ENCODE measurements at regions of chr5 and their contacts with region 1.

Region 1: DNA sequence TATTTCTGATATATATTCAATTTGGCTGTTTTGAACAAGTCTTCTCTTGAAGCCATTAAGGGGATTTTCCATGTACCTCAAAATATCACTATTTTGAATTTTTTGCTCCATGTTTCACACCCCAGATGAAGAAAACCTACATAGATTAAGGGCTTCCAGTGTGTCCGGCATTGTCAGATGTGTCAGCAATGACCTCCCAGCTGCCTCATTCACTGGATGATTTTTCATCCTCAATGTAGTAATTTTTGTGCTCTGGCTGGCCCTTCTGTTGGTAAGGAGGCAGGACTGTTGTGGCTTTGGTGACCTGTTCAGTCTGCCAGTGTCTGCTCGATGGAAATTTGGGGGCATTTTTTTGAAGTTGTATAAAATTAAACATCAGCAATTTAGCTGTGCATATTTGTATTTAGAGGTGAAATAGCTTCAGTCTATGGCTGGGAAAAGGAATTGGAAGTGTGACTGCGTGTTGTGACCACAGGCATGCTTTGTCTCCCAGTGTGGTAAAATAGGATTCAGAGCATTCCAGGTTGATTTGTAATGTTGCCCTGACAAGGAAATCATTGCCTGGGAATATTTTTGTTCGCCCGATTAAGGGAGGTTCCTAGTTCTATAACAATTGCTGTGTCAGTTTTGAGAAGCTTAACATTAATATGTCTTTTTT is 312.4 kb downstream of the ARHGEF28 start:
- DNase-seq: no peak
- H3K4me3 ChIP-seq: no peak overlapping the region
- H3K27ac ChIP-seq: peak overlapping the region; percentile 63 to 75
- H3K4me1 ChIP-seq: peaks cover 0 to 21% of the 10 kb centered on the region in 2 donors
- H3K27me3 ChIP-seq: no peaks in the 10 kb centered on the region
- CTCF ChIP-seq: no peak

Region 2: GRCh38 chr5:74316064-74316679 is 377.8 kb after region 1 on chr5:
- intact Hi-C with region 1: loop called (anchors 10 kb)
- DNase-seq: peak; percentile 43 to 90
- H3K4me3 ChIP-seq: no peak overlapping the region
- H3K27ac ChIP-seq: peak overlapping the region; percentile 78 to 80
- H3K4me1 ChIP-seq: peaks cover 0 to 20% of the 10 kb centered on the region in 2 donors
- H3K27me3 ChIP-seq: no peaks in the 10 kb centered on the region
- CTCF ChIP-seq: no peak